MCF 10A (cell line): ENCODE measurements at regions of chr11 and their contacts with region 1.

Region 1: DNA sequence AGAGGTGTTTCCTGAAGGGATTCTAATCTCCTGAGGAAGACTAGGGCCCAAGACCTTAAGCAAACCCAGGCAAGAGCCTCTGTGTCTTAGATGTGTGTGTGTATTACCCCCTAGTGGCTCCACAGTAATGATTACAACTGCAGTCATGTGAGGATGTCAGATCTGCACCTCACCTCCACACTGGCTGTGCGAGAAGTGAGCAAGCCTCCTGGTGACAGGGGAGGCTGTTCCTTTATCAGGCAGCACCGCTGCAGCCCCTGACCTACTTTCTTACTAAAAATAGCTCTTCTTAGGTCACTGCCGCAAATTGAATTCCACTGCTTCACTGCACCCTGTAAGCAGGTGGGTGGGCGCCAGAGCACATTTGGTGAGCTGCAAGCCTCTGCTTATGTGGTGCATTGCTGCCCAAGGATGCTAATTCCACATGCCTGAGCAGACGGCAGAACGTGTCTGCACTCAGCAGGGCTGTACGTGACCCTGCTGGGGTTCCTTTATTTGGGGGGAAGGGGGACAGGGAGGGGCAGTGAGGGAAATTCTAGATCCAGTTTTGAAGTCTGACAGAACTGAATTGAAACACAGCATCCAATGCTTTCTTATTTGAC is 112.4 kb downstream of the KCNC1 start:
- DNase-seq: peak; percentile 58
- H3K4me3 Mint-ChIP-seq: no peak overlapping the region
- H3K27ac Mint-ChIP-seq: no peak overlapping the region
- H3K4me1 Mint-ChIP-seq: peaks cover 13% of the 10 kb centered on the region
- H3K27me3 Mint-ChIP-seq: no peaks in the 10 kb centered on the region
- CTCF ChIP-seq: no peak

Region 2: DNA sequence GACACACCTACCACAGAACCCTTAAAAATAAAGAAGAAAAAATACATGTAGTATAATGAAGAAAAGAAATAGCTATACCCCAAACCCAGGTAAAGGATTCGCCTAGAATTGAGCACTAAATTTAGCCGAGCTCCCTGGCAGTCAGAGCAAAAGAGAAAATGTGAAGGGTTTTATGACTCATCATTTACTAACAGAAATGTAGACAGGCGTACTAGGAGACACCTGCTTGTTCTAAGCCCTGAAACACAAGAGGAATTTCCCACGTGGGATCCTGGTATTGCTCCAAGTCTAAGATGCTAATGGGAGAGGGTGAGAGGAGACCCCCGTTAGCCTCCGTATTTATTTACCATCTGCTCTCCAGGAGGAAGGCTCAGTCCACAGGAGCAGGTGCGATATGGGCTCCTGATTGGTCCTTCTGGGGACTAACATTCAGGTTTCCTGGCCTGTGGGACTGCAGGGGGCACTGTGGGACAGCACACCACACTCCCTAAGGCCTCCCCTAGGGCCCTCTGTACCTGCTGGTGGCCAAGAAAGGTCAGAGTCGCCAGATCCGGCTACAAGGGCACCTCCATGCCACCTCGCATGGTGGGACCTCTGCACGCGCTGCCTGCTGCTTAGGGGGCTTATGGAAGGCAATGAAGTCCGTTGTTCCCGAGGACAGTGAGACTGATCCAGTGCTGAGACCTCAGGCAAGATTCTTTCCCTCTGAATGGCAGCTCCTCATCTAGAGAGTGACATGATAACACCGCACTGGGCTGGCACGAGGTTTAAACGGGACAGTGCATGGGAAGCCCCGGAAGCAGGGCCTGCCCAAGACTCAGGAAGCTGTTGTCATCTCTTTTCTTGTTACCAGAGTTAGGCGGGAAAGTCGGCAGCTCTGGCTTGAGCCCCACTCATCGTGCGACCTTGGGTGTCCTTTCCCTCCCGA is 86.6 kb before region 1 on chr11:
- CTCF ChIA-PET with region 1: no interaction called
- POLR2A ChIA-PET with region 1: no interaction called
- intact Hi-C with region 1: loop called (anchors 1 kb)
- DNase-seq: peak; percentile 62
- H3K4me3 Mint-ChIP-seq: no peak overlapping the region
- H3K27ac Mint-ChIP-seq: no peak overlapping the region
- H3K4me1 Mint-ChIP-seq: no peaks in the 10 kb centered on the region
- H3K27me3 Mint-ChIP-seq: peaks cover 40% of the 10 kb centered on the region
- CTCF ChIP-seq: peak; percentile 41